Thyroid gland (tissue), 4 donors: ENCODE measurements at regions of chr16 and their contacts with region 1.

Region 1: DNA sequence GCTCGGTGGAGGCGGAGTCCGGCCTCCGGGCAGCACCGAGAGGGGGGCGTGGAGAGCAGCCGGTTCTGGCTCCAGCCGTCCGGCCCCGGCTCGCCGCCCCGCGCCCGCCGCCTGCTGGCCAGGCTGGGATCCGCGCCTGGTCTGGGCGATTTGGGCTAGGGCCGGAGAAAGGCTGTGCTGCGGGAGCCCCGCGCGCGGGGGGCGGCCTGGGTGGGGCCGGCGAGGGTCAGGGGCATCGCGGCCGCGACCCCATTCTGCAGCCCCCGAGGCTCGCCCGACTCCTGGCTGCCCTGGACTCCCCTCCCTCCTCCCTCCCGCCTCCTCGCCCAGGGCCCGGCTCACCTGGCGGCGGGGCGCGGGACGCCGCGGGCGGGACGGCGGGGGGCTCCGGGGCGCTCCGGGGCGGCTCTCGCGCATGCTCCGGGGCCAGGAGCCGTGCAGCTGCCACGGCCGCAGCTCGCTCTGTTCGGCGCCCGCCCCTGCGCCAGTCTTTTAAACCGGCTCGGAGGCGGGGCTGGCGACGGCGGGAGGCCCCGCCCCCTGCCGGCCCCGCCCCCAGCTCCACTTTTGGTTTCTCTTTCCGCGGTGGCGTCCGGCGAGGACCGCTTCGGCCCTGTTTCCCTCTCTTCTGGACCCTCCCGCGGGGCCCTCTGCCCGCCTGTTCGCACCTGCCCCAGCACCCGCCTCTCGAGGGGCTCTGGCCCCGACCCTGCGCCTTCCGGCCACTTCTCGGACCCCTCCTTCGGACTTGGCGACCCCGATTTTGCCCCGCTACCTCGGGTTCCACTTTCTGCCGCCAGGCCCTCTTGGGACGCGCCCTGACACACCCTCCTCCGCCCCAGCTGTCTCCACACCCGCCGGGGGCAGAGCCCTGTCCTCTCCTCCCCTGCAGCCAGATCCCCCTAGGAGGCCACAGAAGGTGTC is at the start of gene SOCS1:
- DNase-seq: peak; percentile 84 to 85
- H3K4me3 ChIP-seq: peak within 1 kb of the TSS; percentile 83 to 88 (median 83)
- H3K27ac ChIP-seq: peak within 1 kb of the TSS; percentile 98 to 99 (median 98)
- H3K4me1 ChIP-seq: peaks cover 18 to 36% of the 10 kb centered on the region in 2 donors
- H3K27me3 ChIP-seq: no peaks in the 10 kb centered on the region
- CTCF ChIP-seq: peak; percentile 49 to 96 (median 96)
- POLR2A ChIP-seq: peak; percentile 76 to 98
- total RNA-seq, gene SOCS1: 2.4 to 11.3 (median 6.2) TPM

Region 2: GRCh38 chr16:10922328-10923145 is 333.5 kb before region 1 on chr16:
- intact Hi-C with region 1: no loop called
- DNase-seq: peak; percentile 92 to 93
- H3K4me3 ChIP-seq: no peak overlapping the region
- H3K27ac ChIP-seq: peak overlapping the region; percentile 34 to 74 (median 68)
- H3K4me1 ChIP-seq: peaks cover 16 to 46% of the 10 kb centered on the region in 2 donors
- H3K27me3 ChIP-seq: no peaks in the 10 kb centered on the region
- CTCF ChIP-seq: no peak
- POLR2A ChIP-seq: no peak

Region 3: DNA sequence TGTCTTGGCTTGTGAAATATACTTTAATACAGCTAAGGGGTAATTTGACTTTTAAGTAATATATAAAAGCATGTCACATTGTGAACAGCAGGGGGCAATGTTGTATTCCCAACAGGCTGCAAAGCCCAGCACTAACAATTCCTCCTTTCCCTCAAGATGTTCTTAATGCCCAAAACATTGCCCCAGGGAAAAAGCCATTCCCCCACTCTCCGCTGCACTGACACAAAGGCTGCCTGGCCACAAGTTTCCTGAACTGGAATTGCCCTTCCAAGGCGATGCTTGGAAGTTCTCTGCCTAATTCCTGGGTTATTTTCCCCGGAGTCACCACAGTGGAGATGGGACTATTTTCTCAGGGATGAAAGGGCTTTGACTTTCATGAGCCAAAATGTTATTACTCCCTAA is 284.4 kb before region 1 on chr16:
- intact Hi-C with region 1: loop called (anchors 2 kb)
- DNase-seq: peak; percentile 38 to 40
- H3K4me3 ChIP-seq: no peak overlapping the region
- H3K27ac ChIP-seq: peak overlapping the region in 1 of 3 donors; percentile 2
- H3K4me1 ChIP-seq: peaks cover 0 to 6% of the 10 kb centered on the region in 2 donors
- H3K27me3 ChIP-seq: no peaks in the 10 kb centered on the region
- CTCF ChIP-seq: peak; percentile 57 to 91 (median 76)
- POLR2A ChIP-seq: no peak

Region 4: DNA sequence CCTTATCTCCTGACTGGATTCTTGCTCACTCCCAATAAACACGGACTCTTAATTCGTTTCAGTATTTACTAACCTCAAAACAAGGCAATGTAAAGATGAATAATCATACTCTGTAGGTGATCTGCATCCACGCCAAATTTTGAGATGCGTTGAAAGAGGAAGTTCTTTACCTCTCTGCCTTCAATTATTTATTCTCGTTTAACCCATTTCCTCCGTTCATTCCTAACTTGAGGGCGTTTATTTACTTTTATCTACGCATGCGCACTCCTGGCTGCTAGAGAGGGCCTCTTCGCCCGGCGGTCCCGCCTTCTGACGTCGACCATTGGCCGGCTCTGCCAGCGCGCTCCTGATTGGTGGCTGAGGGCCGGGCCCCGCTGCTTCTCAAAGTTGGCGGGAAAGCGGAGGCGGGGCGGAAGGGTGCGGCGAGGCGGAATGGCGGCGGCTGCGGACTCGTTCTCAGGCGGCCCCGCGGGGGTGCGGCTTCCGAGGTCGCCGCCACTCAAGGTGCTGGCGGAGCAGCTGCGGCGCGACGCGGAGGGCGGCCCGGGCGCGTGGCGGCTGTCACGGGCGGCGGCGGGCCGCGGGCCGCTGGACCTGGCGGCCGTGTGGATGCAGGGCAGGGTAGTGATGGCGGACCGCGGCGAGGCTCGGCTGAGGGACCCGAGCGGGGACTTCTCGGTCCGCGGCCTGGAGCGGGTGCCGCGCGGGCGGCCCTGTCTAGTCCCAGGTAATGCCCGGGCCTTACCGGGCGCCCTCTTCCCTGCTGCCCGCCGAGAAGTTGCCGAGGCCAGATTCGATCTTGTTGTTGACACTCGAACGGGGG is 89.3 kb after region 1 on chr16 and contains the start of gene RMI2:
- intact Hi-C with region 1: loop called (anchors 5 kb)
- DNase-seq: peak; percentile 96 to 97
- H3K4me3 ChIP-seq: peak within 1 kb of the TSS in 2 of 3 donors; percentile 20 to 31
- H3K27ac ChIP-seq: no peak within 1 kb of the TSS
- H3K4me1 ChIP-seq: peaks cover 8 to 20% of the 10 kb centered on the region in 2 donors
- H3K27me3 ChIP-seq: no peaks in the 10 kb centered on the region
- CTCF ChIP-seq: peak in 1 of 6 experiments; percentile 24
- POLR2A ChIP-seq: peak in 1 of 2 donors; percentile 43
- total RNA-seq, gene RMI2: 2.5 to 2.8 (median 2.6) TPM in 3 of 4 donors, not detected in the other